HCT116 (cell line): ENCODE measurements at regions of chr9 and their contacts with region 1.

Region 1: GRCh38 chr9:97938081-97938644 is at the start of gene HEMGN:
- DNase-seq: no peak
- ATAC-seq: no peak
- H3K4me3 ChIP-seq: no peak within 1 kb of the TSS
- H3K27ac ChIP-seq: no peak within 1 kb of the TSS
- H3K4me1 ChIP-seq: no peaks in the 10 kb centered on the region
- H3K27me3 ChIP-seq: peaks cover 31% of the 10 kb centered on the region
- CTCF ChIP-seq: no peak
- POLR2A ChIP-seq: no peak
- RAD21 ChIP-seq: no peak
- total RNA-seq, gene HEMGN: not detected

Region 2: DNA sequence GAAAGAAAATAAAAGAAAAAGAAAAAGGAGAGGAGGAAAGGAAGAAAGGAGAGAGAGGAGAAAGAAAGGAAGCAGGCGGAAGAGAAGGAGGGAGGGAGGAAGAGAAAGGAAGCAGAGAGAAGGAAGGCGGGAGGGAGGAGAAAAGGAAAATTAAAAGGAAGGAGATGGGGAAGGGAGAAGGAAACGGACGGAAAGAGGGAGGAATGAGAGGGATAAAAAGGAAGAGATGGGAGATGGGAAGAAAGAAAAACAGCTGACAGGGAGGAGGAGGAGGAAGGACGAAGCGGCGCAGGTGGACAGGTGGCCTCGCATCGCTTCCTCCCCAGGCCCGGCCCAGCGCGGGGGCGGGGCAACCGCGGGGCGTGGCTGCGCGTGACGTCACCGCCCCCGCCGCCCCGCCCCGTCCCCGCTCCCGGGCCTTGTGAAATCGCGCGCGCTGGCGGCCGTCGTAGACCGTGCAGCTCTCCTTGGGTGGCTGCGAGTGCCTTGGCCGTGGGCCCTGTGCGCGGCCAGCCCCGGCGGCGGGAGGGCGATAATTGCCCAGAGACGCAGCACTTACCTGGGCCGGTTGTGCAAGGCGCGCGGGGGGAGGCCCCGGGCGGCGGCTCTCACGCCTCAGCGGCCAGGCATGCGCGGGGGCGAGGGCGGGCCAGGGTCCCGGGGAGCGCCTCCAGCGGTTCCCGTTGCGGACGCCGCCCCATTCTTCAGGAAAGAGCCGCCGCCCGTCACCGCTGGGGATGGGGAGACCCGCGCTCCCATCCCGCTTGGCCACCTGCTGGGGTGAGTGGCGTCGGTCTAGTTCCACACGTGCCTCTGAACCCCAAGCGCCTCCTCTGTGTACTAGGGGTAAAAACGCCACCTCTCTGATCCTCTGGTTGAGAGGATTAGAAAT is 134.8 kb before region 1 on chr9:
- CTCF ChIA-PET with region 1: no interaction called
- POLR2A ChIA-PET with region 1: no interaction called
- RAD21 ChIA-PET with region 1: no interaction called
- intact Hi-C with region 1: no loop called
- DNase-seq: peak; percentile 28
- ATAC-seq: peak; percentile 87
- H3K4me3 ChIP-seq: peak overlapping the region; percentile 43 to 56
- H3K27ac ChIP-seq: peak overlapping the region; percentile 62
- H3K4me1 ChIP-seq: peaks cover 19 to 33% of the 10 kb centered on the region in 2 experiments
- H3K27me3 ChIP-seq: no peaks in the 10 kb centered on the region
- CTCF ChIP-seq: peak in 1 of 3 experiments; percentile 7; a peak in 1 of 6 replicates
- POLR2A ChIP-seq: peak; percentile 32
- RAD21 ChIP-seq: no peak

Region 3: GRCh38 chr9:97820373-97820772 is 117.8 kb before region 1 on chr9:
- CTCF ChIA-PET with region 1: no interaction called
- POLR2A ChIA-PET with region 1: no interaction called
- RAD21 ChIA-PET with region 1: no interaction called
- intact Hi-C with region 1: no loop called
- DNase-seq: no peak
- ATAC-seq: no peak
- H3K4me3 ChIP-seq: no peak overlapping the region
- H3K27ac ChIP-seq: no peak overlapping the region
- H3K4me1 ChIP-seq: no peaks in the 10 kb centered on the region
- H3K27me3 ChIP-seq: no peaks in the 10 kb centered on the region
- CTCF ChIP-seq: no peak
- POLR2A ChIP-seq: no peak
- RAD21 ChIP-seq: no peak

Region 4: DNA sequence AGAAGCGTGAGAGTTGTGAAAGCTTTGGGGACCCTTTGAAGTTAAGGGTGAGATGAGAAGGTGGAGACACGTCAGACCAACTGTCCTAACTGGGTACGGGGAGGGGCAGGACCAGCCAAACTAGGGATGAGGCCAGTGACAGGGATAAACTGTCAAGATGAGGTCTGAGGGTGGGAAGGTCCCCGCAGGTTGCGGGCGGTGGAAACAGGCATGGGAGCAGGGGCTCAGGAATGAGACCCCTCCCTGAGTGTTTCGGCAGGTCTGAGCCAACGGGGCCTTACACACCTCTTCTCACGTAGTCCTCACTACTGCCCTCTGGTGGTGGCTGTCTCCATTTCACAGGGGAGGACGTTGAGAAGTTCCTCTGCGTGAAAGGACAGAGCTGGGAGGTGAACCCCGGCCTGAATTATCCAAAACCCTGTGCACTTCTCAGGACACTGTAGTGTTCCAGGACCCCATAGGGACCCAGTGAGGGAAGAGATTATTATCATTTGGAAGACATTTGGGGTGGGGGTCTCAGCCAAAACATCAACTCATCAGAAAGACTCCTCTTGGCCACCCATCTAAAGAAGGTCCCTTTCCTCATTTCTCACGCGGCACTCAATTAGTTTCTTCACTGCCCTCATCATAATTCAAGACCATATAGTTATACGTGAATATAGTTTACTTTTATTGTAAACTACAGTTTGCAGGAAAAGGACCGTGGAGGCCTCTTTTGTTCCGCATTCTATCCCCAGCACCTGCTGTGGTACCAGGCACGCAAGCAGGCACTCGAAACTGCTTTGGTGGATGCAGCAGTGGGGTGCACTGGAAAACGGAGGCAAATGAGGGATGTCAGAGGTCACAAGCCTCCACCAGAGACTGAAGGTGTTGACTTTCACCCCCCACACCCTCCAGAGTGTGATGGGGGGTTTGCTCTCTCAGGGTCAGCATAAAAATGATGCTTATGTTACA is 96.7 kb after region 1 on chr9:
- CTCF ChIA-PET with region 1: no interaction called
- POLR2A ChIA-PET with region 1: no interaction called
- RAD21 ChIA-PET with region 1: no interaction called
- intact Hi-C with region 1: loop called (anchors 5 kb)
- DNase-seq: peak; percentile 76
- ATAC-seq: peak; percentile 97
- H3K4me3 ChIP-seq: 0 out of 4 replicates have a peak overlapping the region, but pooled peaks of 1 of the 2 experiments have one; percentile 4
- H3K27ac ChIP-seq: no peak overlapping the region
- H3K4me1 ChIP-seq: peaks cover 0 to 31% of the 10 kb centered on the region in 2 experiments; a peak in 2 of 4 replicates
- H3K27me3 ChIP-seq: no peaks in the 10 kb centered on the region
- CTCF ChIP-seq: peak; percentile 64 to 89 (median 85)
- POLR2A ChIP-seq: no peak
- RAD21 ChIP-seq: peak; percentile 49